ENCODE measurements at regions of chr2 and their contacts with region 1.

Region 1: GRCh38 chr2:191811807-191812602 is 34.9 kb downstream of the CAVIN2 start:
- DNase-seq: peak; percentile 72
- H3K4me3 Mint-ChIP-seq: no peak overlapping the region
- H3K27ac Mint-ChIP-seq: no peak overlapping the region
- H3K4me1 Mint-ChIP-seq: no peaks in the 10 kb centered on the region
- H3K27me3 Mint-ChIP-seq: no peaks in the 10 kb centered on the region
- CTCF ChIP-seq: peak; percentile 76

Region 2: GRCh38 chr2:191566344-191566743 is 245.7 kb before region 1 on chr2:
- CTCF ChIA-PET with region 1: interaction called, 17 read pairs
- POLR2A ChIA-PET with region 1: no interaction called
- intact Hi-C with region 1: loop called (anchors 1 kb)
- DNase-seq: peak; percentile 80
- H3K4me3 Mint-ChIP-seq: no peak overlapping the region
- H3K27ac Mint-ChIP-seq: no peak overlapping the region
- H3K4me1 Mint-ChIP-seq: no peaks in the 10 kb centered on the region
- H3K27me3 Mint-ChIP-seq: no peaks in the 10 kb centered on the region
- CTCF ChIP-seq: peak; percentile 76

Region 3: DNA sequence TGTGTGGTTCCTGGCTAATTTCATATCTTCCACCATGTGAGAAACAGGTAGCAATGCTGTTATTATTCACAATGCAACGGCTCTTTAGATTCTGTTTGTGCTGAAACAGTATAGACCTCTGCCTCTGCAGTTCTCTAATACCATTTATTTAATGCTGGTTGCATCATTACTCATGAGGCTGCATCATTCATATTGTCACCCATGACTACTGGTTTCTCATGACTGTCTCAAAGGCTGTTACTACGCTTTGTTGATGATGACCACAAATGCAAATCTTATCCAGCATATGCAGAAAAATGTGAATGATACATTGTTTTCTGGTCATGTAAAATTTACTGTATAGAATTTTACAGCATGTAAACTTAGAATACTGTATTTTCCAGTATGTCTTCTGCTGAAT is 12.4 kb after region 1 on chr2:
- CTCF ChIA-PET with region 1: interaction called, 16 read pairs
- POLR2A ChIA-PET with region 1: no interaction called
- intact Hi-C with region 1: no loop called
- DNase-seq: no peak
- H3K4me3 Mint-ChIP-seq: no peak overlapping the region
- H3K27ac Mint-ChIP-seq: no peak overlapping the region
- H3K4me1 Mint-ChIP-seq: no peaks in the 10 kb centered on the region
- H3K27me3 Mint-ChIP-seq: no peaks in the 10 kb centered on the region
- CTCF ChIP-seq: no peak

Region 4: GRCh38 chr2:191846515-191847476 is 34.8 kb after region 1 on chr2 and contains the start of gene CAVIN2:
- CTCF ChIA-PET with region 1: interaction called, 12 read pairs
- POLR2A ChIA-PET with region 1: interaction called, 4 read pairs
- intact Hi-C with region 1: loop called (anchors 1 kb)
- DNase-seq: peak; percentile 95
- H3K4me3 Mint-ChIP-seq: peak within 1 kb of the TSS; percentile 90
- H3K27ac Mint-ChIP-seq: peak within 1 kb of the TSS; percentile 86
- H3K4me1 Mint-ChIP-seq: peaks cover 35% of the 10 kb centered on the region
- H3K27me3 Mint-ChIP-seq: no peaks in the 10 kb centered on the region
- CTCF ChIP-seq: no peak
- total RNA-seq, gene CAVIN2: 14.7 and 16.4 TPM in 2 replicates

Region 5: GRCh38 chr2:192155511-192156118 is 343.6 kb after region 1 on chr2:
- CTCF ChIA-PET with region 1: interaction called, 342 read pairs
- POLR2A ChIA-PET with region 1: interaction called, 4 read pairs
- intact Hi-C with region 1: no loop called
- DNase-seq: no peak
- H3K4me3 Mint-ChIP-seq: no peak overlapping the region
- H3K27ac Mint-ChIP-seq: no peak overlapping the region
- H3K4me1 Mint-ChIP-seq: no peaks in the 10 kb centered on the region
- H3K27me3 Mint-ChIP-seq: no peaks in the 10 kb centered on the region
- CTCF ChIP-seq: no peak

Region 6: GRCh38 chr2:192286093-192286701 is 474.2 kb after region 1 on chr2:
- CTCF ChIA-PET with region 1: interaction called, 6 read pairs
- POLR2A ChIA-PET with region 1: no interaction called
- intact Hi-C with region 1: loop called (anchors 1 kb)
- DNase-seq: peak; percentile 68
- H3K4me3 Mint-ChIP-seq: no peak overlapping the region
- H3K27ac Mint-ChIP-seq: no peak overlapping the region
- H3K4me1 Mint-ChIP-seq: no peaks in the 10 kb centered on the region
- H3K27me3 Mint-ChIP-seq: no peaks in the 10 kb centered on the region
- CTCF ChIP-seq: peak; percentile 43